Prostate gland (tissue), 2 donors: ENCODE measurements at regions of chr1 and their contacts with region 1.

Region 1: DNA sequence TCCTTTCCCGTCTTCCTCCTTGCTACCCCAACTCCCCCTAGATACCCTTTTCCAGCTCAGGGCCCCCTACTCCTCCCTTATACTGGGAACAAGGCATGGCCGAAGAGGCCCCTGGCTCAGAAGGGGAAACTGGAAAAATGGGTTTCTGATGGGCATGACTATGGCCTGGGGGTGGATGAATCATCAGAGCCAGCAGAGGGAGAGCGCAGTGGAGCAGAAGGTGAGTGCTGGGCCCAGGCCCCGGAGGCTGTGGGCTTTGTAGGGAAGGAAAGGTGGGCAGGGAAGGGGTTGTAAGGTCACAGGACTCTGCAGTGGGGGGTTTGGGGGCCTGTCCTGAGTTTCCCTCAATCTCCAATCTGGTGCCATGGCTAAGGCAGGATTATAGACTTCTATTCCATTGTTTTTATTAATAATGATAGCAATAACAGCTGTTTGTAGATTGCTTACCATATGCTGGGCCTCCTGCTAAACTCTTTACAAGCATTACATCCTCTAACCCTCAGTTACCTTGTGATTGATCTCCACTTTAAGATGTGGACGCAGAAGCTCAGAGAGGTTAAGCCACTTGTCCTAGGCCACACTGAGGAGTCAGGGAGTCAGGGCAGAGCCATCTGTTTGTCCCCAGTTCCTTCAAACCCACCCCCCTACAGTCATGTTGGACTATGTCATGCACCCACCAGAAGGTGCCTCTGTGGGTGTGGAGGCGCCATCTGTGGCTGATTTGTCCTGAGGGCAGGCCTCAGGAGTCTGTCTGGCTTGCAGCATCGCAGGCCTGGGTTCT is 36.2 kb upstream of the ZNF362 start:
- DNase-seq: peak; percentile 15
- H3K4me3 ChIP-seq: no peak overlapping the region
- H3K27ac ChIP-seq: no peak overlapping the region
- H3K4me1 ChIP-seq: no peaks in the 10 kb centered on the region
- H3K27me3 ChIP-seq: no peaks in the 10 kb centered on the region
- CTCF ChIP-seq: peak in 1 of 4 experiments; percentile 19
- POLR2A ChIP-seq: no peak

Region 2: GRCh38 chr1:33472349-33472980 is 252.4 kb after region 1 on chr1 and contains the start of gene ZSCAN20:
- intact Hi-C with region 1: loop called (anchors 10 kb)
- DNase-seq: peak; percentile 96
- H3K4me3 ChIP-seq: peak within 1 kb of the TSS; percentile 41 to 44
- H3K27ac ChIP-seq: peak within 1 kb of the TSS; percentile 53 to 70
- H3K4me1 ChIP-seq: no peaks in the 10 kb centered on the region
- H3K27me3 ChIP-seq: no peaks in the 10 kb centered on the region
- CTCF ChIP-seq: peak in 2 of 4 experiments; percentile 18 to 28
- POLR2A ChIP-seq: peak; percentile 41
- total RNA-seq, gene ZSCAN20: 4.7 to 11.1 TPM